Naive thymus-derived CD4-positive, alpha-beta T cell (primary cell): ENCODE measurements at regions of chr2 and their contacts with region 1.

Region 1: DNA sequence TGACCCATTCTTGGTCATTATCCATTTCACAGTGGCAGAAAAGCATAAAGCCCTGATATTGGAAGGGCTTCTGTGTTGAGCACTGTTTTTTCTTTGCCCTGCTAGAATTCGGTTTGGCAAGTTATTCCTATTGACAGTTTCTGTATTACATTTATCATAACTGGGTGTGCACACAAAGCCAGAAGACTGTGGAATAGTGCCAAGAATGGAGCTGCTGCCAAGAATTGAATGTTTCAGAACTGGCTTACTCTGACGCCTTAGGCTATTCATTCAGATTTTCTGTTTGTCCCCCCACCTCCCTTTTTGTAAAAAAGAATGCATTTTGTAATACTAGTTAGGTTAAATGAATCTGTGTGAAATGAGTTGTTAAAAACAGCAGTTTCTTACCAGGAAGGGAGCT is 12.7 kb downstream of the KDM3A start:
- DNase-seq: no peak
- ATAC-seq: no peak
- H3K4me3 ChIP-seq: no peak overlapping the region
- H3K4me3 Mint-ChIP-seq: no peak overlapping the region
- H3K27ac ChIP-seq: no peak overlapping the region
- H3K27ac Mint-ChIP-seq: no peak overlapping the region
- H3K4me1 ChIP-seq: peaks cover 0 to 7% of the 10 kb centered on the region in 2 donors
- H3K4me1 Mint-ChIP-seq: peaks cover 21 to 59% (median 42%) of the 10 kb centered on the region in 7 donors
- H3K27me3 ChIP-seq: no peaks in the 10 kb centered on the region
- H3K27me3 Mint-ChIP-seq: no peaks in the 10 kb centered on the region

Region 2: GRCh38 chr2:86487062-86487461 is 33.2 kb after region 1 on chr2:
- CTCF ChIA-PET with region 1: no interaction called
- POLR2A ChIA-PET with region 1: no interaction called
- intact Hi-C with region 1: loop called in 1 of 2 experiments (anchors 5 kb)
- DNase-seq: peak in 2 of 9 donors; percentile 14 to 22
- ATAC-seq: no peak
- H3K4me3 ChIP-seq: no peak overlapping the region
- H3K4me3 Mint-ChIP-seq: no peak overlapping the region
- H3K27ac ChIP-seq: no peak overlapping the region
- H3K27ac Mint-ChIP-seq: peak overlapping the region in 8 of 9 donors; percentile 1 to 75 (median 44)
- H3K4me1 ChIP-seq: no peaks in the 10 kb centered on the region
- H3K4me1 Mint-ChIP-seq: peaks cover 0 to 34% (median 8%) of the 10 kb centered on the region in 7 donors
- H3K27me3 ChIP-seq: no peaks in the 10 kb centered on the region
- H3K27me3 Mint-ChIP-seq: no peaks in the 10 kb centered on the region